ENCODE measurements at regions of chr5 and their contacts with region 1.

Region 1: GRCh38 chr5:121430538-121430937 is 421.1 kb upstream of the FTMT start:
- DNase-seq: no peak
- H3K4me3 Mint-ChIP-seq: no peak overlapping the region
- H3K27ac Mint-ChIP-seq: no peak overlapping the region
- H3K4me1 Mint-ChIP-seq: no peaks in the 10 kb centered on the region
- H3K27me3 Mint-ChIP-seq: no peaks in the 10 kb centered on the region

Region 2: DNA sequence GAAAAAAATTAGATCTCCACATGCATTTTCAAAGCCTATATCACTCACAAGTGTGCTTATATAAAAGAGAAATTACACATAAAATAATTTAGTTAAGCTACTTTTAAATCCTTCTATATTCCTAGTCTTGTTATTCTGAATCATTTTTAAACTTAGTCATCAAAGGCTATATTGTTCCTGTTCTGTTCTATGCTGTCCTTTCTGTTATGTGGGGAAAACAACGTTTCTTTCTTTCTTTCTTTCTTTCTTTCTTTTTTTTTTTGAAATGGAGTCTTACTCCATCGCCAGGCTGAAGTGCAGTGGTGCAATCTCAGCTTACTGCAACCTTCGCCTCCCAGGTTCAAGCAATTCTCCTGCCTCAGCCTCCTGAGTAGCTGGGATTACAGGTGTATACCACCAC is 31.9 kb after region 1 on chr5:
- CTCF ChIA-PET with region 1: no interaction called
- intact Hi-C with region 1: loop called (anchors 1 kb)
- DNase-seq: no peak
- H3K4me3 Mint-ChIP-seq: no peak overlapping the region
- H3K27ac Mint-ChIP-seq: no peak overlapping the region
- H3K4me1 Mint-ChIP-seq: no peaks in the 10 kb centered on the region
- H3K27me3 Mint-ChIP-seq: no peaks in the 10 kb centered on the region